Activated T-helper 1 cell treated with anti-CD3 and anti-CD28 coated beads, Interleukin-12 subunit alpha, Interleukin-12 subunit beta, Interleukin-2, Interleukin-4 antibody, amounts not matched to agents 30 ng/mL and 10 ng/mL and 1 ng/mL, durations not matched to agents 14 hours and 24 hours and 36 hours (primary cell): ENCODE measurements at regions of chr2 and their contacts with region 1.

Region 1: GRCh38 chr2:7773362-7774360 is 856.4 kb downstream of the RNF144A start:
- DNase-seq: peak; percentile 39
- H3K4me3 Mint-ChIP-seq: peak overlapping the region; percentile 28
- H3K27ac Mint-ChIP-seq: peak overlapping the region; percentile 91
- H3K4me1 Mint-ChIP-seq: peaks cover 41% of the 10 kb centered on the region
- H3K27me3 Mint-ChIP-seq: no peaks in the 10 kb centered on the region

Region 2: GRCh38 chr2:7567646-7568045 is 206.0 kb before region 1 on chr2:
- intact Hi-C with region 1: loop called (anchors 1 kb)
- DNase-seq: peak; percentile 47
- H3K4me3 Mint-ChIP-seq: peak overlapping the region; percentile 25
- H3K27ac Mint-ChIP-seq: peak overlapping the region; percentile 90
- H3K4me1 Mint-ChIP-seq: peaks cover 59% of the 10 kb centered on the region
- H3K27me3 Mint-ChIP-seq: no peaks in the 10 kb centered on the region

Region 3: GRCh38 chr2:7725171-7725849 is 48.4 kb before region 1 on chr2:
- intact Hi-C with region 1: loop called (anchors 1 kb)
- DNase-seq: peak; percentile 64
- H3K4me3 Mint-ChIP-seq: peak overlapping the region; percentile 87
- H3K27ac Mint-ChIP-seq: peak overlapping the region; percentile 95
- H3K4me1 Mint-ChIP-seq: peaks cover 73% of the 10 kb centered on the region
- H3K27me3 Mint-ChIP-seq: no peaks in the 10 kb centered on the region

Region 4: DNA sequence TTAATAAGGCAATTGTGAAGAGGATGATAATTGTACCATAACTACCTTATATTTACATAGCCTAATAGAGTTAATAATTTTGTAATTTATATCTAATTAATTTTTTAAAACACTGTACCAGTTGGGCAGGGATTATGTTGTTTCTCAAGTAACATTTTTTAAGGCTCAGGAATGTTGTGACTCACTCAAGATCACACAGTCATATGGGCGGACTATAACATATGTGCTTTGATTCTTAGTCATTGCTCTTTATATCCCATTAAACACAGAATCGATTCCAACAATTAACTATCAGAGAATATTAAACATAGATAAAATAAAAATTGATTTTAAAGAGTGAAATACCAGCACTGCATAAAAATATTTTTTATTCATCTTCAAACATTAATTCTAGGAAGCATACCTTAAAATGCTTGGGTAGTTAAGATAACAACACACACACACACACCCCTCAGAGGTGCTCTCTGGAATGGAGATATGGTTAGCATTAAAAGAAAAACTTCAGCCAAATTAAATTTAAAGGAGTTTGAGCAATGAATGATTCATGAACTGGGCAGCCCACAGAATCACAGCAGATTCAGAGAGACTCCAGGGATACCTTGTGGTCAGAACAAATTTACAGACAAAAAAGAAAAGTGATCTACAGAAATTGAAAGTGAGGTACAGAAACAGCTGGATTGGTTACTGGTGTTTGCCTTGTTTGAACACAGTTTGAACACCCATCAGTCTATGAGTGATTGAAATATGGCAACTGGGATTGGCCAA is 38.8 kb after region 1 on chr2:
- intact Hi-C with region 1: loop called (anchors 5 kb)
- DNase-seq: no peak
- H3K4me3 Mint-ChIP-seq: no peak overlapping the region
- H3K27ac Mint-ChIP-seq: no peak overlapping the region
- H3K4me1 Mint-ChIP-seq: no peaks in the 10 kb centered on the region
- H3K27me3 Mint-ChIP-seq: peaks cover 1% of the 10 kb centered on the region

Region 5: DNA sequence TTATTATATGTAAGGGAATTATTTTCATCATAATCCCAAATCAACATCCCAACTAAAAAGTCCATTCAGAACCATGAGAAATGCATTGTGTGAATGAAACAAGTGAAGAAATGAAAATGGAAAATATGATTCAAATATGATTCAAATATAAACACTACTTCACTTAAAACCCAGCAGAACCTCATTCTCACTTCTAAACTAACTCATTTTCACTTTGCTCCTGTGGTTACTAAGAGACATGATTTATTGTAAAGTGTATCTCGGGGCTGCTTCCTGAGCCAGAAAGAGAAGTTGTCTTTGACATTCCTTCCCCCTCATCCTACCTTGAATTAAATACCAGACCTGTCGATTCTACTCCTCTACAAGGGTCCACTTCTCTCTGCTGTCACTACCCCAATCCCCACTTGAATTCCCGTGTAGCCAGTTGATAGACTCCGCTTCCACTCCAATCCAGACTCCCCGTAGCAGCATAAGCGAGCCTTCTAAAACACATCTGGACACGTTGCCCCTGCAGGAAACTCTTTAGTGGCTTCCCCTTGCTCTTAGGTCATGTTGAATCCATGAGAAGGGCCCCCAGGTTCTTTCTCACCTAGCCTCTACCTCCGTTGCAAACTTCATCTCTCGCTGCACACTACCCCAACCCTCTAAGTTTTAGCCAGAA is 211.2 kb after region 1 on chr2:
- intact Hi-C with region 1: loop called (anchors 1 kb)
- DNase-seq: no peak
- H3K4me3 Mint-ChIP-seq: peak overlapping the region; percentile 12
- H3K27ac Mint-ChIP-seq: peak overlapping the region; percentile 82
- H3K4me1 Mint-ChIP-seq: peaks cover 28% of the 10 kb centered on the region
- H3K27me3 Mint-ChIP-seq: no peaks in the 10 kb centered on the region

Region 6: GRCh38 chr2:8004250-8004681 is 230.6 kb after region 1 on chr2:
- intact Hi-C with region 1: no loop called
- DNase-seq: no peak
- H3K4me3 Mint-ChIP-seq: no peak overlapping the region
- H3K27ac Mint-ChIP-seq: no peak overlapping the region
- H3K4me1 Mint-ChIP-seq: peaks cover 10% of the 10 kb centered on the region
- H3K27me3 Mint-ChIP-seq: peaks cover 2% of the 10 kb centered on the region

Region 7: DNA sequence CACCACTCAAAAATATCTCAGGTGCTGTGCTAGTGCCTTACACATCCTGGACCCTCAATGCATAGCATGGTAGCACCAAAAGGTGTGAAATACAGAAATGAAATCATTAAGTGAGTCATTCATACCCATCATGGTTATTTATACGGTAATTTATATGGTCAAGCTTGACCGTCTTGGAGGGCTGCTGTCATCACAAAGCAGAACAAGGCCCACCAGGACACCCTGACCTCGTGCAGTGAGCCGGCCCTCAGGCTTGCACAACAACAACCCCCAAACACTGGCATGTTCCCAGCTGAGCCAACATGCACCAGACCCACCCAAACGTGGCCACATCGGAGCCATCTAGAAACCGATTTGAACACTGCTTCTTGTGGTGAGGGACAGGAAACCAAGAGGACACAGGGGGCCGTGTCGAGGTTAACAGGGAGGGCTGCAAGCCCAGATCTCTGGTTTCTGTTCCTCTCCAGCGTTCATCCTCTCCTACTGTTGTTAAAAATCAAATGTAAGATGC is 529.7 kb after region 1 on chr2:
- intact Hi-C with region 1: loop called (anchors 2 kb)
- DNase-seq: peak; percentile 77
- H3K4me3 Mint-ChIP-seq: peak overlapping the region; percentile 65
- H3K27ac Mint-ChIP-seq: peak overlapping the region; percentile 85
- H3K4me1 Mint-ChIP-seq: peaks cover 91% of the 10 kb centered on the region
- H3K27me3 Mint-ChIP-seq: peaks cover 7% of the 10 kb centered on the region

Region 8: GRCh38 chr2:8606226-8606625 is 832.6 kb after region 1 on chr2:
- intact Hi-C with region 1: loop called (anchors 1 kb)
- DNase-seq: no peak
- H3K4me3 Mint-ChIP-seq: no peak overlapping the region
- H3K27ac Mint-ChIP-seq: no peak overlapping the region
- H3K4me1 Mint-ChIP-seq: peaks cover 44% of the 10 kb centered on the region
- H3K27me3 Mint-ChIP-seq: peaks cover 1% of the 10 kb centered on the region